ENCODE measurements at regions of chr2 and their contacts with region 1.

Region 1: DNA sequence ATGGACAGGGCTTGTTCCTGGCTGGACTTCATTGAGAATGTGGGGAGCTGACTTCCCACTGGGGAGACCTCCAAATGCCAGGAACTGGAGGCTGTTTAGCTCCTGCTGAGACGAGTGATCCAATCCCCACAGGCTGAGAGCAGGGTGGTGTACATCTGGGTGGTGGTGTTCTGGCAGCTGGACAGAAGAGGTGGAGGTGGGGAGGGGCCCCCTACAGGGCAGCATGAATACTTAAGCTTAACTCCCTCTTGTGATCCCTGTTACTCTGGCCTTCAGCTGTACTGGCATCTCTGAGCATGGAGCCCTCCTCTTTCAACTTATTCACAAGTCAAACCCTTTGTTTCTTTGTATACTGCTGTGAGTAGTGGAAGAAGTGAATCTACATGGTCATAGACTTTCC is 167.8 kb upstream of the LYPD1 start:
- DNase-seq: no peak
- ATAC-seq: no peak

Region 2: GRCh38 chr2:132632000-132632649 is 205.6 kb before region 1 on chr2:
- intact Hi-C with region 1: no loop called
- DNase-seq: no peak
- ATAC-seq: peak; percentile 45

Region 3: DNA sequence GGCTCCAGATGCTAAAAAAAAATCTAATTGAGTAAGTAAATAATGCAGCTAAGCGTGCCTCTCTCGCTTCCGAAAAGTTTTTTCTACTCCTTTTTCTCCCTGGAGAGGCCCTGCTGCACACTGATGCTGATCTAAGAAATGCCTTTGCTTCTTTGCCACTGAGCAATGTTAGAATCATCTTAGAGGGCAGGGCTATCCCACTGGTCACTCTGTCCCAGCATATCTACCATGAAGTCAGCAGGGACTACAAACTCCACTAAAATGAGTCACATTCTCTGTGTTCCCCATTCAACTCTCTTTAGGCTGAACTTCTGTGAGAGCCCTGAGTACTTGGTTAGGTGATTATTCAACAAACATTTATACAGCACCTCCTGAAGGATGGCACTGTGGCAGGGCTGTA is 40.2 kb before region 1 on chr2:
- intact Hi-C with region 1: no loop called
- DNase-seq: no peak
- ATAC-seq: no peak

Region 4: DNA sequence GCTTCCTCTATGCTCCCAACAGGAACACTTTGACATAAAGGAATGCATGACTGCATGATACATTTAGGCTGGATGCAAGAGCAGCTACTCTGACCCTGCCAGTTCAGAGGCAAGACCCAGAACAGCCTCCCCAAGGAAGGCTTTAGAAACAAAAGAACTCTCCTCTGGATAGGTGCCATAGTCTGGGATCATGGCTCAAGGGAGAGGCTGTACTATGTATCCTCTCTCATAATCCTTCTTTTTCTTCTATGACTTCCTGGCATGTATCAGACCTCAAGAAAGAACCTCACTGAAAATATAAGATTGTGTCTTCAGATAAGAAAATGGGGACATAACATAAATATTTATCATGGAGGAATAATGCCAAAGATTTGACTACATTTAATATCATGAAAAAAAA is 26.2 kb after region 1 on chr2:
- intact Hi-C with region 1: loop called (anchors 1 kb)
- DNase-seq: no peak
- ATAC-seq: no peak